Gastrocnemius medialis (tissue), 4 donors: ENCODE measurements at regions of chrX and their contacts with region 1.

Region 1: GRCh38 chrX:17374619-17375366 is at the start of gene NHS:
- DNase-seq: peak in 1 of 2 donors; percentile 20
- ATAC-seq: peak; percentile 30 to 36
- H3K4me3 ChIP-seq: peak within 1 kb of the TSS; percentile 39 to 50 (median 42)
- H3K27ac ChIP-seq: peak within 1 kb of the TSS in 3 of 4 donors; percentile 30 to 38 (median 32)
- H3K4me1 ChIP-seq: no peaks in the 10 kb centered on the region
- H3K27me3 ChIP-seq: peaks cover 0 to 15% (median 8%) of the 10 kb centered on the region in 3 donors
- CTCF ChIP-seq: peak in 1 of 5 experiments; percentile 36
- POLR2A ChIP-seq: no peak
- total RNA-seq, gene NHS: 0.20 to 0.39 (median 0.30) TPM

Region 2: GRCh38 chrX:17242470-17242869 is 132.3 kb before region 1 on chrX:
- in situ Hi-C with region 1: no loop called
- intact Hi-C with region 1: loop called (anchors 10 kb)
- DNase-seq: peak in 1 of 2 donors; percentile 10
- ATAC-seq: no peak
- H3K4me3 ChIP-seq: no peak overlapping the region
- H3K27ac ChIP-seq: no peak overlapping the region
- H3K4me1 ChIP-seq: no peaks in the 10 kb centered on the region
- H3K27me3 ChIP-seq: no peaks in the 10 kb centered on the region
- CTCF ChIP-seq: peak; percentile 33 to 72 (median 59)
- POLR2A ChIP-seq: no peak

Region 3: DNA sequence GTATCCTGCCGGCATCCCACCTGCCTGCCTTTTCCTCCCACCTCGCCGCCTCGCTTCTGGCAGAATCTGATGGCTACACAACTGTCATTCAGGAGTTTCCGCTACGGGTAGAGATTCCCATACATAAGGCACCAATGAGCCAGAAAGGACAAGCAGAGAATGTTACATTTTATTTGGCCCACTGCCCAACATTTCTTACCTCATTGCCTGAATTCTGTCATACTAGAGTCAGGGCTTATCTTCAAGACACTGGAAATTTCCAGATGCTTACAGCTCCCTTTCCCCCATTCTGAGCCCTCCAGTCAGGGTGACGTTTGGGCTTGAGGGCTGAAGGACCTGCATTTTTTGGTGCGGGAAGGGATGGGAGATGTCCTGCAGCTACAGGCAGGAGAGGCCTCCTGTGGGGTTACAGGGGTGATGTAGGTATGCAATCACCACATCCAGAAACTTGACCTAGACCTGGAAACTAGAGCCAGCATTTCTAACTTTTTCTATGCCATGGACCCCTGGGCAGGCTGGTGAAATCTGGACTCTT is 113.3 kb after region 1 on chrX:
- in situ Hi-C with region 1: no loop called
- intact Hi-C with region 1: no loop called
- DNase-seq: no peak
- ATAC-seq: no peak
- H3K4me3 ChIP-seq: no peak overlapping the region
- H3K27ac ChIP-seq: no peak overlapping the region
- H3K4me1 ChIP-seq: no peaks in the 10 kb centered on the region
- H3K27me3 ChIP-seq: no peaks in the 10 kb centered on the region
- CTCF ChIP-seq: no peak
- POLR2A ChIP-seq: no peak

Region 4: DNA sequence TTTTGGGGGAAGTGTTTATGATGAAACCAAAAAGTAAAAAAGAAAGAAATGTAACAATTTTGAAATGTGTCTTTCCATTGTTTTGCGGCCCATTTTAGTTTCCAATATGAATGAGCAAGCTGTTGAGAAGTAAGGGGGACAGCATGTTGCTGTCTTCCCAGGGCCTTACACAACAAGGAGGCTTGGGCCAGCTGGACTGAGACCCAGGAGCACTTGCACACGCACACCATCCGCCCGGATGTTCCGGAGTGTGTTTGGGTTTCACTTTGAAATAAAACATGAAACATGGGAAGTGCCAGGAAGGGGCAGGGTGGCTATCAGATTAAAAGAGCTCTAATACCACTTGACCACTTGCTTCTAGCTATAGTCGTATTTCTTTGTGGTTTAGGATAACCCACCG is 144.6 kb after region 1 on chrX:
- in situ Hi-C with region 1: no loop called
- intact Hi-C with region 1: loop called (anchors 2 kb)
- DNase-seq: peak; percentile 22 to 44
- ATAC-seq: peak in 1 of 2 donors; percentile 58
- H3K4me3 ChIP-seq: no peak overlapping the region
- H3K27ac ChIP-seq: peak overlapping the region; percentile 9 to 40 (median 24)
- H3K4me1 ChIP-seq: no peaks in the 10 kb centered on the region
- H3K27me3 ChIP-seq: no peaks in the 10 kb centered on the region
- CTCF ChIP-seq: no peak
- POLR2A ChIP-seq: no peak